MCF 10A (cell line): ENCODE measurements at regions of chr1 and their contacts with region 1.

Region 1: DNA sequence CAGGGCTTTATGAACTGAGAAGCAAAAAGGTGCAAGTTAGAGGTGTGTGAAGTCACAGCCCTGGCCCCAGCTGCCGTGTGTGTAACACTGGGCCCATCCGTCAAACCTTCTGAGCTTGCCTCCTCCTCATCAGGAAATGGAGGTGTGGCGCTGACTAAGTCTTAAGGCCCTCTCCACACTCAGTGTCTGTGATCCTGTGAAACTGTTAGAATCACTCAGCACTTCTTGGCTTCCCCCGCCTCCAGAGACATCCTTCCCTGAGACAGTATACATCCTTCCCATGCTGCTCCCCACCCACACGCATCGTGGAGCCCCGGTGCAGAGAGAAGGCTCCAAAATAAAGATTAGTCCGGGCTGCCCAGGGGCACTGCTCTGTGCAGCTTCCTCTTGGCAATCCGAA is 33.3 kb downstream of the LRP8 start:
- DNase-seq: peak; percentile 76
- H3K4me3 Mint-ChIP-seq: no peak overlapping the region
- H3K27ac Mint-ChIP-seq: peak overlapping the region; percentile 84
- H3K4me1 Mint-ChIP-seq: peaks cover 19% of the 10 kb centered on the region
- H3K27me3 Mint-ChIP-seq: no peaks in the 10 kb centered on the region
- CTCF ChIP-seq: no peak

Region 2: DNA sequence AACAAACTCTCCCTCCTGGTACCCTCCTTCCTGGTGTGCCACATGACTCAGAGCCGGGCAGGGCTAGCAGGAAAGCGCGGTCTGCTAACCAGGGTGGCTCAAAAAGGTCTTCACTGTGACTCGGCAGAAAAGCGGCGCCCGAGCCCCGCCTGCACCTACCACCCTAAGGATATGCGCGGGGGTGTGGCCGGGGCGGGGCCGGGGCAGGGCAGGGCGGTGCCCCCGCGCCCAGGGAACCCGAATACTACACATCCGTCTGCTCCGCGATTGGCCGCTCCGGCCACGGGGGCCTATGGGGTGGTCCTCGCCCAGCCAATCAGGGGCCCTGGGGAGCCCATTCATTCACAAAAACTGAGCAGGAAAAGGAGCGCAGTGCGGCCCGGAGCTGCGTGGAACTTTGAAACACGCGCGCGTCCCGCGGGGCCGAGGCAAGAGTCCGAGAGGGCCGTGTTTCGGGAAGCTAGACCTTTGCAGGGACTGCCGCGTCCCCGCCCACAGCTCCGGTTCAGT is 31.6 kb after region 1 on chr1:
- CTCF ChIA-PET with region 1: no interaction called
- POLR2A ChIA-PET with region 1: interaction called, 3 read pairs
- intact Hi-C with region 1: loop called (anchors 1 kb)
- DNase-seq: peak; percentile 96
- H3K4me3 Mint-ChIP-seq: peak overlapping the region; percentile 82
- H3K27ac Mint-ChIP-seq: peak overlapping the region; percentile 95
- H3K4me1 Mint-ChIP-seq: no peaks in the 10 kb centered on the region
- H3K27me3 Mint-ChIP-seq: no peaks in the 10 kb centered on the region
- CTCF ChIP-seq: no peak

Region 3: GRCh38 chr1:53524428-53525375 is 230.1 kb after region 1 on chr1:
- CTCF ChIA-PET with region 1: no interaction called
- POLR2A ChIA-PET with region 1: no interaction called
- intact Hi-C with region 1: no loop called
- DNase-seq: no peak
- H3K4me3 Mint-ChIP-seq: no peak overlapping the region
- H3K27ac Mint-ChIP-seq: no peak overlapping the region
- H3K4me1 Mint-ChIP-seq: no peaks in the 10 kb centered on the region
- H3K27me3 Mint-ChIP-seq: peaks cover 15% of the 10 kb centered on the region
- CTCF ChIP-seq: no peak